Right ventricle myocardium inferior (tissue), 1 donor: ENCODE measurements at regions of chr1 and their contacts with region 1.

Region 1: DNA sequence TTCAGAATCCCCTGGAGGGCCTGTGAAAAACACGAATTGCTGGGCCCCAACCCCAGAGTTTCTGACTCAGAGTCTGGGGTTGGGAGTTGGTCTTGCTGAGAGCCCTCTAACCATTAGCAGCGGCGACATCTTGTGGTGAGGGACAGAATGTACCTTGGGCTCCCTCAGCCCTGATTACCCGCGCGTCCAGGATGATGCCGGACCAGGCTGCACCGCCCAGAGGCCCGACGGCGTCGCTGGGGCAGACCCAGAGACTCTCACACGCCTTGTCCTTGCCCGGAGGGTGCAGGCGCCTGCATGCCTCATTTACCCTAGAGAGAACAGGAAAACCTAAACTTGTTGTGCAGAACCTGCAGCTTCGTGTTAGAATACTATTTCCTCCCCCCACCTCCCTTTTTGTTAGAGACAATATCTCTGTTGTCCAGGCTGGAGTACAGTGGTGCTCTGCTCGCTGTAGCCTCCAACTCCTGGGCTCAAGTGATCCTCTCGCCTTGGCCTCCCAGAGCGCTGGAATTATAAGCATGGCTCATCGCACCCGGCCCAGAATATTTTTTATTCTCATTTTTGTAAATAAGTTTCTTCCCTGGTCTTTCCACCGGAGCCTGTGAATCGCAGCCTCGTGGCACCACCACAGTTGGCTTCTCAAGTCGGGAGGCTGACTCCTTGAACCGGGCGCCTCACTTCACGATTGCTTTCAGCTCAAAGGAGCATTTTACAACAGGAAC is 22.2 kb upstream of the RD3 start:
- DNase-seq: peak; percentile 83
- ATAC-seq: peak; percentile 84

Region 2: DNA sequence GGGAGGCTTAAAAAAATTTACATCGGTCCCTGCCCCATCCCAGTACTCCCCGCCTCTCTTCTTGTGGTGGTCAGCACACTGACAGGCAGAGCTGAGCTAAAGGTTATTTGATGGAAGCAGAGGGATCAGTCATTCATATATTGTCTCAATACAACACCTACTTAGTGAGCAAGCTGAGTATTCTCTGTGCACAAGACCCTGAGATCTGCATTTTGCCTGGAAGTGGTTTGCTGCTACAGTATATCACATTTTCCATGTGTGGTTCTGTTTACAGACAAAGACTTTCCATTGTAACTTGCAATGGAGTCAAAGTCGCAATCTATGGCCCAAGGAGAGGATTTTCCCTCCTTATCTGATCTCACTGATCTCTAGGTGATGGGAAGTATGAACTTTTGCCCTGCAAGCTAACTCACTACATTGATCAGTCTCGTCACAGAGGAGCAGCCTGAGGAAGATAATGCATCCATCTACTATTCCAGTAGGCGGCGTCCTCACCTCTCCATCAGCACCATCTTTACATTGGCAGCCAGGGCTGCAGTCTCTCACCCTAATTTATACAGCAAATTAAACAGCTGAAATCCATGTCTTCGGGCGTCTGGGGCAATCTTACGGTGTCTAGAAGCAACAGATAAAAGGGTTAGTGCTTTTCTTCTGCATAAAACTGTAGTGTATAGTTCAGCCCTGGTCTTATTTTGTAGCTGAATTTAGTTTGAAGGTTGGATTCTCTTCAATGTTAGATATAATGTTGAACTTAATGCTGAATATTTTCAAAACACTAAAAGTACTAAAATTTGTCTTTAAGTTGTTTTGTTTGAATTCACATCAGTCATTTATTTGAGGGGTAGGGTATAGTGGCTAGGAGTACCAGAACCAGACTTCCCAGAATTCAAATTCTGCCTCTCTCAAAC is 190.8 kb before region 1 on chr1:
- intact Hi-C with region 1: loop called (anchors 5 kb)
- DNase-seq: no peak
- ATAC-seq: no peak

Region 3: GRCh38 chr1:211469938-211470529 is 44.2 kb before region 1 on chr1:
- intact Hi-C with region 1: loop called (anchors 1 kb)
- DNase-seq: peak; percentile 82
- ATAC-seq: peak; percentile 90

Region 4: DNA sequence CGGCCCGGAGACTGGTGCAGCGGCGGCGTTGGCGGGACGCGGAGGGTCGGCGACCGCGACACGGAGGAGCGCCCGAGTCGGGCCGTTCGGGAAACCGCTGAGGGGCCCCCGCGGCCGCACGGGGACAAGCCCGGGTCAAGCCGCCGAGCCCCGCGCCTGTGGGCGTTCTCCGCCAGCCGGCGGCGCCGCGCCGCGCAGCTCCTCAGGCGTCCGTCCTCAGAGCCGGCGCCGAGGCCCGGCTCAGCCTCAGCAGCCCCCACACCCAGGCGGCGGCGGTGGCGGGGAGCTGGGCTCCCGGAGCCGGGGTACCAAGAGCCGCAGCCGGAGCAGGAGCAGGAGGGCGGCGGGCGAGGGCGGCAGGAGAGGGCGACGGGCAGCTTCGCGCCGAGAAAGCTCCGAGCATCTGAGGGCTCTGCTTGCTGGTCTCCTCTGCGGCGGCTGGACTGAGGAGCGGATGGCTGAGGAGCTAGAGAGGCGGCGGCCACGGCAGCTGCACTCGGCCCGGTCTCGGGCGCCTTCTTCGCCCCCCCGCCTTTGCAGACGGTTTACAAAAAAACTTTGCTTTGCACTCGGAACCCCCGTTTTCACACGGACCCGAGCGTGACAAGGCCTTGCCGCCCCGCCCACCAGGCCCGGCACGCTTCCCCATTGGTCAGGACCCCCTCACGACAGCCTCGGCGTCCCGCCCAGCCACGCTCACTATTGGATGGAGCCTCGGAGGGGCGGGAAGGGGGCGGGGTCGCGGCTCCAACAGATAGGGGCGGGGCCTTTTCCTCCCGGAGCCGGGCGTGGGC is 64.6 kb after region 1 on chr1 and contains the start of gene SLC30A1:
- intact Hi-C with region 1: loop called (anchors 2 kb)
- DNase-seq: peak; percentile 100
- ATAC-seq: peak; percentile 97
- total RNA-seq, gene SLC30A1: 11.5 TPM

Region 5: DNA sequence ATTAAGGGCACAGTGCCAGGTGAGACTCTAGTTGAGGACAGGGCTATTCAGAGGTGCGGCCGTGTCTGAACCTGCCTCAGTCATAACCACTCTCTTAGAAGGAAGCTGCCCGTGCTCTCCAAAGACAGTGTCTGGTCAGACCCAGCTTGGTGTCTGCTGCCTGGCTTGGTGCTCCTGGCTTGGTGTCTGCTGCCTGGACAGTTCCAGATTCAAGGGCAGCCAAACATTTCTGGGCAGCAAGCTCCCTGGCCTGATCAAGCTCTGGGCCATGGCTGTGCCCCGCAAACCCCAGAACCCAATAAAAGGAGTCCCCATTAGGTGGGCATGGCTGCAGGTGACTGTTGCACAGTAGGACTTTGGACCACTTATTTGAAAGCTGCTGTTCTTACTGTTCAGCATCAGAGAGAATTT is 133.5 kb after region 1 on chr1:
- intact Hi-C with region 1: loop called (anchors 2 kb)
- DNase-seq: peak; percentile 30
- ATAC-seq: peak; percentile 38

Region 6: GRCh38 chr1:211654838-211655787 is 140.9 kb after region 1 on chr1:
- intact Hi-C with region 1: loop called (anchors 1 kb)
- DNase-seq: peak; percentile 93
- ATAC-seq: peak; percentile 95